HCT116 (cell line): ENCODE measurements at regions of chr2 and their contacts with region 1.

Region 1: GRCh38 chr2:235746257-235747084 is 252.6 kb downstream of the AGAP1 start:
- DNase-seq: peak; percentile 62
- ATAC-seq: peak; percentile 94
- H3K4me3 ChIP-seq: no peak overlapping the region
- H3K27ac ChIP-seq: no peak overlapping the region
- H3K4me1 ChIP-seq: peaks cover 0 to 11% of the 10 kb centered on the region in 2 experiments; a peak in 2 of 4 replicates
- H3K27me3 ChIP-seq: no peaks in the 10 kb centered on the region
- CTCF ChIP-seq: peak; percentile 76 to 88 (median 85)
- POLR2A ChIP-seq: no peak
- RAD21 ChIP-seq: peak; percentile 92

Region 2: DNA sequence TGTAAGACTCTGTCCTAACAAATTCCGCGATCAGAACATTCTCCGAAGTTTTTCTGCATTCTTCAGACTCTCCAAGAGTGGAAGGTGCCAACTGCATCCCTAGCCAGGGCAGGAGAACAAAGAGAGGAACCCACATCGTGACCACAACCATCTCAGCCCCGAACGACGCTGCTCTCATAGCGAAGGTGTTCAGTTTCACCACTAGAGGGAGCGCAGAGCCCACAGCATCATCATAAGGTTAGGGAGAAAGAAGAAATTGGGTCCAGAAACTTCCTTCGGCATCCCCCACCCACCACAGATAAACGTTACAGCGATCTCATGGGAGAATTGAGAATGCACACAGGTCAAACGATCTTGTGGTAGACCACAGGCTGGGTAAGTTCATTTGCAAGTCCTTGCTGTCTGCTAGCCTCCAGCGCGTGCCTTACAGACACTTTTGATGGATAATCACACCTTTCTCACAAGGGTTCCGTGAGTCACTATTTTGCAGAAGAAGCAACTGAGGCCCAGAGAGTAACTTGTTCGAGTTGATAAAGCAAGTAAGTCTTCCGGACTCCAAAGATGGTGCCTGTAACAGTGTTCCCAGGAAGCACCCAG is 1195.9 kb before region 1 on chr2:
- CTCF ChIA-PET with region 1: no interaction called
- POLR2A ChIA-PET with region 1: no interaction called
- RAD21 ChIA-PET with region 1: no interaction called
- intact Hi-C with region 1: loop called (anchors 10 kb)
- DNase-seq: peak; percentile 66
- ATAC-seq: peak; percentile 96
- H3K4me3 ChIP-seq: no peak overlapping the region
- H3K27ac ChIP-seq: no peak overlapping the region
- H3K4me1 ChIP-seq: peaks cover 0 to 10% of the 10 kb centered on the region in 2 experiments; a peak in 1 of 4 replicates
- H3K27me3 ChIP-seq: no peaks in the 10 kb centered on the region
- CTCF ChIP-seq: peak; percentile 88 to 94 (median 90)
- POLR2A ChIP-seq: no peak
- RAD21 ChIP-seq: peak; percentile 99

Region 3: GRCh38 chr2:235135990-235136561 is 610.4 kb before region 1 on chr2:
- CTCF ChIA-PET with region 1: interaction called, 10 read pairs
- POLR2A ChIA-PET with region 1: no interaction called
- RAD21 ChIA-PET with region 1: interaction called in 1 of 2 experiments, 5 read pairs
- intact Hi-C with region 1: loop called (anchors 1 kb)
- DNase-seq: peak; percentile 77
- ATAC-seq: peak; percentile 99
- H3K4me3 ChIP-seq: no peak overlapping the region
- H3K27ac ChIP-seq: no peak overlapping the region
- H3K4me1 ChIP-seq: no peaks in the 10 kb centered on the region
- H3K27me3 ChIP-seq: no peaks in the 10 kb centered on the region
- CTCF ChIP-seq: peak; percentile 72 to 88 (median 75)
- POLR2A ChIP-seq: no peak
- RAD21 ChIP-seq: peak; percentile 93

Region 4: DNA sequence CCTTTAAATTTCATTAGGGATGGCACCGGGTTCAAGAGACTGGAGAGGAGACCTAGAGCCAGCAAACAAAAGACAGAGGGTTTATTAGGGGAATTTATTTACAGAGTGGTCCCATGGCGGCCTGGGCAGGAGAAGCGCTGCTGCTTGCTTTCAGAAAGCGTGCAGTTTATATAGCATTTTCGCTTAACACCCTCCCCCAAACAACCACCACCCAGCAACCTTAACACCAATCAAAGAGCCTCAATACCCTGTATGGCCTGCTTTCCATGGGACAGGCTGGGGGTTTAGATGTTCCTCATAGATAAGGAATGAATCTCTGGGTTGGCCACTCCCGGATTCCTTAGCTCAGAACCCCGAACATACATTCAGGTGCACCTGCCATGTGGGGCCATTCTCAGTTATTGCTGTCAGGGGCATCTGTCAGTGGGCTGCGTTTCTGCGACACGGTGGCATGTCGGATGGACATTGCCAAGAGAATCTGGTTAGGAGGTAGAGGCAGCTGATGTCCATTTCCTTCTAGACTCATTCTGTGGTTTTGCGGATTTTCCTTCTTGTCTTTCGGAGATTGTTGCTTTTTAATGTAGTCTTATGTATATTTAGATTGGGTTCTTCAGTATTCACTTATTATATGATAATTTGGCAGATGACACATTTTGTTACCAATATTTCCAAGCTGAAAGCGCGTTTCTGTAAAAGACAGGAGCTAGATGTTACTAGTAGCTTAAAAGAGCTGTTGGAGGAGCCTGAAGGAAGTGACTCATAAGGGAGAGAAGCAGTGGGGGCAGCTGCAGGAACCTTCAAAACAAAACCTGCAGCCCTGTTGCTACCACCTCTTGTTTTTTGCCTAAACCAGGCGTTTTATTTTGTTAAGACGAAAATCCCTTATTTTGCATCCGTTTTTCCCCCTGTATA is 245.5 kb before region 1 on chr2:
- CTCF ChIA-PET with region 1: interaction called, 5 read pairs
- POLR2A ChIA-PET with region 1: no interaction called
- RAD21 ChIA-PET with region 1: no interaction called
- intact Hi-C with region 1: loop called (anchors 5 kb)
- DNase-seq: no peak
- ATAC-seq: peak; percentile 69
- H3K4me3 ChIP-seq: peak overlapping the region; percentile 8 to 37
- H3K27ac ChIP-seq: peak overlapping the region; percentile 19
- H3K4me1 ChIP-seq: peaks cover 42 to 67% of the 10 kb centered on the region in 2 experiments
- H3K27me3 ChIP-seq: no peaks in the 10 kb centered on the region
- CTCF ChIP-seq: no peak
- POLR2A ChIP-seq: no peak
- RAD21 ChIP-seq: no peak

Region 5: DNA sequence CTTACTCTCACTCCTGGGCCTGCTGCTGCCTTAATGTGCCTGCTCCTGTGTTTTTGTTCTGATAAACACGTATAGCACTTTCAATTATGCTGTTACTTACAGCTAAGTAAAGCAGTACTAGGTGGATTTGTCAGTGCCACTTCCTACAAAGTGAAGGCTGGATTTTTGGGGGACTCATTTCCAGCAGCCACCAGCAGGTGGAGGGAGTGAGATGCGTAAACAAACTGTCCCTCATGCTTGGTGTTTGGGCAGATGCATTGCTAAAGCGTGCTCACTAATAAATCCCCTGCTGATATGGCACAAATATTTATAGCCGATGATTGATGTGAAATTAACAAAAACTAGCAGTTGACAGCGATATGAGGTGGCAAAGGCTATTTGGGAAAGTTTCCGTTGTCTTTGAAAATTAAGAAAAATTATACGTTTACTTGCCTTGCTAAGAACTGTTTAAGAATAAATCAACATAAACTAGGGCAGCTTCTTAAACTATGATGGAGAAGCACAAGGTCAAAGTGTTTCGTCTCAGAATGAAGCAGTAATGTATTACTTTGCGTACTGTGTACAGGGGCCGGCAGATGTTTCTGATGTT is 151.0 kb before region 1 on chr2:
- CTCF ChIA-PET with region 1: interaction called, 69 read pairs
- POLR2A ChIA-PET with region 1: no interaction called
- RAD21 ChIA-PET with region 1: interaction called, 4 to 9 read pairs
- intact Hi-C with region 1: loop called (anchors 1 kb)
- DNase-seq: peak; percentile 47
- ATAC-seq: peak; percentile 79
- H3K4me3 ChIP-seq: no peak overlapping the region
- H3K27ac ChIP-seq: no peak overlapping the region
- H3K4me1 ChIP-seq: no peaks in the 10 kb centered on the region; a peak in 2 of 4 replicates
- H3K27me3 ChIP-seq: no peaks in the 10 kb centered on the region
- CTCF ChIP-seq: peak; percentile 87 to 90 (median 89)
- POLR2A ChIP-seq: no peak
- RAD21 ChIP-seq: peak; percentile 85

Region 6: DNA sequence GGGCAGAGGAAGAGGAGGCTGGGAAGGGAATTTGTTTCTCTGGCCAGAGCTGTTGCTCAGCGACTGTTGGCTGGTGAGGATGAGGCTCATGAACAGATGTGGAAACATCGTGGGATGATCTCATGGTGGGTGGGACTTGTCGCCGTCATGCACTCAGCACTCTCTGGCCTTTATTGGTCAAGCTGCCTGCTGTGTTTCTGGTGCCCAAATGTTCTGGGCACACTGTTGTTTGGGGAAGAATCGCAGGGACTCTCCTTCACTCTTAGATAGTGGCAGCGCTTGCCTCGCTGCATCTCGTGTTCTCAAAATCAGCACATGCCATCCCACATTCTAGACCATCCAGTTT is 107.1 kb before region 1 on chr2:
- CTCF ChIA-PET with region 1: interaction called, 17 read pairs
- POLR2A ChIA-PET with region 1: no interaction called
- RAD21 ChIA-PET with region 1: no interaction called
- intact Hi-C with region 1: loop called (anchors 10 kb)
- DNase-seq: no peak
- ATAC-seq: no peak
- H3K4me3 ChIP-seq: no peak overlapping the region
- H3K27ac ChIP-seq: no peak overlapping the region
- H3K4me1 ChIP-seq: peaks cover 4 to 22% of the 10 kb centered on the region in 2 experiments; a peak in 3 of 4 replicates
- H3K27me3 ChIP-seq: no peaks in the 10 kb centered on the region
- CTCF ChIP-seq: no peak
- POLR2A ChIP-seq: no peak
- RAD21 ChIP-seq: no peak

Region 7: GRCh38 chr2:235669983-235670962 is 76.2 kb before region 1 on chr2:
- CTCF ChIA-PET with region 1: no interaction called
- POLR2A ChIA-PET with region 1: no interaction called
- RAD21 ChIA-PET with region 1: no interaction called
- intact Hi-C with region 1: loop called (anchors 10 kb)
- DNase-seq: no peak
- ATAC-seq: peak; percentile 24
- H3K4me3 ChIP-seq: peak overlapping the region; percentile 36 to 63
- H3K27ac ChIP-seq: peak overlapping the region; percentile 61; the same call in 1 of the 2 replicates
- H3K4me1 ChIP-seq: peaks cover 15 to 34% of the 10 kb centered on the region in 2 experiments; a peak in 3 of 4 replicates
- H3K27me3 ChIP-seq: no peaks in the 10 kb centered on the region
- CTCF ChIP-seq: peak in 2 of 3 experiments; percentile 12 to 27; a peak in 1 of 6 replicates
- POLR2A ChIP-seq: no peak
- RAD21 ChIP-seq: peak; percentile 49

Region 8: DNA sequence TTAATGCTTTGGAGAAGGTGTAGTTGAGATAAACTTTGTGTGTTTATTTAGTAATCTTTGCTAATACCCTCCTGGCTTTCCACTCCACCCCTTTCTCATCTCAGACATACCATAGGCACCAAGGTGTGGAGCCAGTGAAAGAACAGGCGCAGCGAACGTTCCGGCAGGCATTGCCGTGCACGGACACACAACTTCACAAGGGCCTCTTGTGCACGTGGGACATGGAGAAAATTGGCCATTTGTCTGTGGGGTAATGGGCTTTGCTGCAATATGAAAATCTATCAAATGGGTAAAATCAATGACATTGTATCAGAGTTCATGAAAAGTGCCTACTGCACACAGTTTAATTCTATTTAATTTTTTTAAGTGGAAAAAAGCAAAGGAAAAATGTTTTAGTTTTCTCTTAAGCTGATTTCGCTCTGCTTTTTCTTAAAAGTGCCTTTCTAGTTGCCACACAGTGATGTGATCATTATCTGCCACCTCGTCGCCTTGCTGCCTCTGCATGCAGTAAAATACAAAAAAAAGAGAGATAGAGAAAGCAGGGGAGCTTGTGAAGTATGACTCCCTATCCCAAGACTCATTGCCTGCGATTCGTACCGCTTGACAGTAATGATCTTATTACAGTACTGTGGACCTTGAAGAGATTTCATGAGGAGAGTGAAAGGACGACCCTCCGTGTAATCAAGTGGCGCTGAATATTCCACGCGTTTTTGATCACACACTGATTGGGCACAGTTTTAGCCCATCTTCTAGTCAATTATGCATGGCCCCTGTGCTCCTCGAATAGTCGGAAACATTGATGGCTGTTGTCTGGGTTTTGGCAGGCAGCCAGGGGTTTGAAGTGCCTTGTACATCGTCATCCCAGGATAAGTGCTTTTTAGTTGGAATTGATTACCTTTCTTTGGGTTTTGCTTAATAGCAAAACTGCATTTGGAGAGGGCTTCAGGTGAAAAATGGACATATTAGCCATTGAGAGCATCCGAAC is 233.3 kb after region 1 on chr2:
- CTCF ChIA-PET with region 1: no interaction called
- POLR2A ChIA-PET with region 1: no interaction called
- RAD21 ChIA-PET with region 1: no interaction called
- intact Hi-C with region 1: no loop called
- DNase-seq: no peak
- ATAC-seq: no peak
- H3K4me3 ChIP-seq: no peak overlapping the region
- H3K27ac ChIP-seq: no peak overlapping the region
- H3K4me1 ChIP-seq: no peaks in the 10 kb centered on the region
- H3K27me3 ChIP-seq: no peaks in the 10 kb centered on the region
- CTCF ChIP-seq: no peak
- POLR2A ChIP-seq: no peak
- RAD21 ChIP-seq: no peak